ENCODE measurements at regions of chr10 and their contacts with region 1.

Region 1: GRCh38 chr10:124741281-124741921 is 2.8 kb downstream of the FAM53B start:
- DNase-seq: peak; percentile 80
- H3K4me3 ChIP-seq: no peak overlapping the region
- H3K27ac ChIP-seq: no peak overlapping the region
- H3K4me1 ChIP-seq: peaks cover 28% of the 10 kb centered on the region
- H3K27me3 ChIP-seq: no peaks in the 10 kb centered on the region
- CTCF ChIP-seq: peak; percentile 78

Region 2: GRCh38 chr10:124530215-124530665 is 211.2 kb before region 1 on chr10:
- CTCF ChIA-PET with region 1: interaction called, 30 read pairs
- POLR2A ChIA-PET with region 1: no interaction called
- intact Hi-C with region 1: loop called (anchors 2 kb)
- DNase-seq: peak; percentile 88
- H3K4me3 ChIP-seq: no peak overlapping the region
- H3K27ac ChIP-seq: no peak overlapping the region
- H3K4me1 ChIP-seq: no peaks in the 10 kb centered on the region
- H3K27me3 ChIP-seq: no peaks in the 10 kb centered on the region
- CTCF ChIP-seq: peak; percentile 93

Region 3: GRCh38 chr10:124632064-124632531 is 109.3 kb before region 1 on chr10:
- CTCF ChIA-PET with region 1: interaction called, 4 read pairs
- POLR2A ChIA-PET with region 1: no interaction called
- intact Hi-C with region 1: loop called (anchors 5 kb)
- DNase-seq: peak; percentile 26
- H3K4me3 ChIP-seq: no peak overlapping the region
- H3K27ac ChIP-seq: no peak overlapping the region
- H3K4me1 ChIP-seq: no peaks in the 10 kb centered on the region
- H3K27me3 ChIP-seq: no peaks in the 10 kb centered on the region
- CTCF ChIP-seq: peak; percentile 48; the same call in 1 of the 2 replicates

Region 4: DNA sequence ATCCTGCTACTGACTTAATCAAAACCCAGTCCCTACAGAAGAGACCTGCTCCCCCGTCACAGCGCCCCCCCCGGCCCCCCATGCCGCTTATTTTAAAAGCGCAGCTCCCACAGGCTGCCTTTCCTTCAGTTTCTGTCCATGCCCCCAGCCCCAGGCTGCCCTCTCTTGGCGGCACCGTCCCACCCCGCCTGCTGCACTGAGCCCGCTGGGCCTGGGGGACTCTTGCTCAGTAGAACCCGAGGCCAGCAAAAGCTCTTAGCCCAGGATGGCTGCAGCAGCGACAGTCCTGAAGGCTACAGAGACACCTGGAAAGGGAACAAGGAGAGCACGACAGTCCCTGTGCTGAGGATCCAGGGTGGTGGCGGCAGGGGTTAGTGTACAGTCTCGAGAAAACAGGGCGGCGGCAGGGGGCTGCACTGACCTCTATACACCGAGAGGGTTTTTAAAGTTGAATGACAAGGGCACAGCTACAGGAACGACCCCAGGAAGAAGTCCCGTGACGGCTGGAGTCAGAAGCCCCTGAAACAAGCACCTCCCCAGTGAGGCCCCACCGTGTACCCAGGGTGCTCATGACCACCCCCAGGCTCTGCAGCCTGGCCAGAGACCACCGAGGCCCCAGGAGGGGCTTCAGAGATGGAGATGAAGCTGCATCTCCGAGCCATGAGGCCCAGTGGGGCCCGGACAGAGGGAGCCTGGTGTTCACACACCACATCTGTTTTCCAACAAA is 254.9 kb after region 1 on chr10:
- CTCF ChIA-PET with region 1: no interaction called
- POLR2A ChIA-PET with region 1: no interaction called
- intact Hi-C with region 1: no loop called
- DNase-seq: no peak
- H3K4me3 ChIP-seq: no peak overlapping the region
- H3K27ac ChIP-seq: no peak overlapping the region
- H3K4me1 ChIP-seq: no peaks in the 10 kb centered on the region
- H3K27me3 ChIP-seq: no peaks in the 10 kb centered on the region
- CTCF ChIP-seq: no peak